Gastrocnemius medialis (tissue), 4 donors: ENCODE measurements at regions of chr10 and their contacts with region 1.

Region 1: GRCh38 chr10:77983384-77984341 is 45.7 kb downstream of the POLR3A start:
- DNase-seq: no peak
- ATAC-seq: peak; percentile 90 to 94
- H3K4me3 ChIP-seq: no peak overlapping the region
- H3K27ac ChIP-seq: peak overlapping the region; percentile 84 to 98 (median 89)
- H3K4me1 ChIP-seq: peaks cover 29 to 43% of the 10 kb centered on the region in 2 donors
- H3K27me3 ChIP-seq: no peaks in the 10 kb centered on the region
- CTCF ChIP-seq: no peak
- POLR2A ChIP-seq: peak; percentile 37 to 75

Region 2: GRCh38 chr10:77877461-77878344 is 106.0 kb before region 1 on chr10:
- in situ Hi-C with region 1: no loop called
- intact Hi-C with region 1: loop called (anchors 5 kb)
- DNase-seq: peak in 1 of 2 donors; percentile 78
- ATAC-seq: peak; percentile 18 to 46
- H3K4me3 ChIP-seq: peak overlapping the region in 2 of 4 donors; percentile 11 to 34
- H3K27ac ChIP-seq: peak overlapping the region; percentile 82 to 96 (median 90)
- H3K4me1 ChIP-seq: peaks cover 66 to 84% of the 10 kb centered on the region in 2 donors
- H3K27me3 ChIP-seq: no peaks in the 10 kb centered on the region
- CTCF ChIP-seq: no peak
- POLR2A ChIP-seq: peak; percentile 33 to 37